ENCODE measurements at regions of chr21 and their contacts with region 1.

Region 1: DNA sequence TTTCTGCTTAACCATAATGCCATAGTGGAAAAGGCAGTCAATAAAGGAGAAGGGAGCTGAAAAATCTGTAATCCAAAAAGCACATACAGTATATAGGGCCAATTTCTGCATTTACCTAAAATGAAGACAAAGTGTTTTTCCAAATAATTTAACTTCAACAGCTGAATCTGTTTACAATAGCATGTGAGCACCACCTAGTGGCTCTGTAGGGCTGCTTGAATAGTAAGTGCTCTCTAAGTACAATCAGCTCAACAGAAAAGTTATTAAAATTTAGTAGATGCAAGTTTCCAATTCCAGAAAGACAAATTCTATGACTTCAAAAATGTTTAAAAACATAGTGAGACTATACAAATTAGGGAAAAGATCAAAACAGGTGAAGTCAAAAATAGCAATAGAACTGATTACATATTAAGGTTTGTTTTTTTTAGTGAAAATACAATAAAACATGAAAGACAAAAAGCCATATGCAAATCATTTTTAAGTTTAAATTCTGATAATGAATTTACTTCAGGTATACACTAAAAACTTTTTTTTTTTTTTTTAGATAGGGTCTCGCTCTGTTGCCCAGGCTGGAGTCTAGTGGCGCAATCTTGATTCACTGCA is 220.0 kb downstream of the SETD4 start:
- DNase-seq: peak; percentile 76
- H3K4me3 ChIP-seq: no peak overlapping the region
- H3K27ac ChIP-seq: no peak overlapping the region
- H3K4me1 ChIP-seq: no peaks in the 10 kb centered on the region
- CTCF ChIP-seq: peak; percentile 100

Region 2: DNA sequence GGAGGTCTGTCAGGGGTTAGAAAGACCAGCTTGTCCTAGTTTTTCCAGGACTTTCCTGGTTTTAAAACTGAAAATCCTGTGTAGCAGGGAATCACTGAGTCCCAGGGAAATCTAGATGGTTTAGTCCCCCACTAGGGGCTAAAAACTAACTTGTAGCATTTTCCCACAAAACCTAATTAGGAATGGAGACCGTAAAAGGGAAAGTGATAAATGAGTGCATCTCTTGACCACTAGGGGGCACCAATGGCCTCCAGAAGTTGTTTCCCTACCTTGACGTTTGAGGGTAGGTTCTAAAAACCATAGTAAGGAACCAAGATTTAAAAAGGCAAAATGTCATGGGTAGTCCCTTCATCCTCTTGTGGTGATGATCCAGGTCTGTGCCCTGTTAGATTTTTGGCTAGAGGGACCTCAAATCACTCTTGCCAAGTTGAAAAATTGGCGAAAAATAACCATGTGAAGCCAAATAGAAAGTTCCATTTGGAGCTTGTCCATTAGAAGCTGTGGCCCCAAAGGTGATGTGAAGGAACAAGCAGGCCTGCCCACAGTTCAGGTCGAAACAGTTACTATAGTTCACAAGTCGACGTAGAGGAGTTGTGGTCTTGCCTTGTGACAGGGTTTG is 1147.0 kb before region 1 on chr21:
- CTCF ChIA-PET with region 1: no interaction called
- POLR2A ChIA-PET with region 1: no interaction called
- intact Hi-C with region 1: loop called (anchors 2 kb)
- DNase-seq: peak; percentile 62
- H3K4me3 ChIP-seq: no peak overlapping the region
- H3K27ac ChIP-seq: no peak overlapping the region
- H3K4me1 ChIP-seq: no peaks in the 10 kb centered on the region
- CTCF ChIP-seq: peak; percentile 89

Region 3: GRCh38 chr21:34745557-34746255 is 1094.6 kb before region 1 on chr21:
- CTCF ChIA-PET with region 1: no interaction called
- POLR2A ChIA-PET with region 1: no interaction called
- intact Hi-C with region 1: loop called (anchors 1 kb)
- DNase-seq: peak; percentile 69
- H3K4me3 ChIP-seq: peak overlapping the region; percentile 12
- H3K27ac ChIP-seq: no peak overlapping the region
- H3K4me1 ChIP-seq: no peaks in the 10 kb centered on the region
- CTCF ChIP-seq: peak; percentile 93

Region 4: DNA sequence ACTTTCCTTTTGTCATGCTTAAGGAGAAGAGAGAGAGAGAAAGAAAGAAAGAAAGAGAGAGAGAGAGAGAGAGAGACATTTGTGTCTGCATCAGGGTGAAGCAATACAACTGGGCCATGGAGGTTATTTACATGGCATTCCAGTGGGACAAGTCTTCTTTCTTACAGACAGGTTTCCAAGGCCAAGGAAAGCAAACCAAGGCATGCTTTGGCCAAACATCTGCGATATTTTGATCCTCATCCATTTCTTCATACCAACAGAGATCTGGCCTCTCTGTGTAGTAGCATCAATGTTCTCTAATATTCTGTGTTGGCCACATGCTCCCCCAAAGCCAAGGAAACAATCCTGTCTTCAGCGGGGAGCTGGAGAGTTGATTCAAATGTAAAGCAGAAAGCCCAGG is 72.1 kb before region 1 on chr21:
- CTCF ChIA-PET with region 1: no interaction called
- POLR2A ChIA-PET with region 1: no interaction called
- intact Hi-C with region 1: no loop called
- DNase-seq: no peak
- H3K4me3 ChIP-seq: no peak overlapping the region
- H3K27ac ChIP-seq: no peak overlapping the region
- H3K4me1 ChIP-seq: no peaks in the 10 kb centered on the region
- CTCF ChIP-seq: no peak

Region 5: DNA sequence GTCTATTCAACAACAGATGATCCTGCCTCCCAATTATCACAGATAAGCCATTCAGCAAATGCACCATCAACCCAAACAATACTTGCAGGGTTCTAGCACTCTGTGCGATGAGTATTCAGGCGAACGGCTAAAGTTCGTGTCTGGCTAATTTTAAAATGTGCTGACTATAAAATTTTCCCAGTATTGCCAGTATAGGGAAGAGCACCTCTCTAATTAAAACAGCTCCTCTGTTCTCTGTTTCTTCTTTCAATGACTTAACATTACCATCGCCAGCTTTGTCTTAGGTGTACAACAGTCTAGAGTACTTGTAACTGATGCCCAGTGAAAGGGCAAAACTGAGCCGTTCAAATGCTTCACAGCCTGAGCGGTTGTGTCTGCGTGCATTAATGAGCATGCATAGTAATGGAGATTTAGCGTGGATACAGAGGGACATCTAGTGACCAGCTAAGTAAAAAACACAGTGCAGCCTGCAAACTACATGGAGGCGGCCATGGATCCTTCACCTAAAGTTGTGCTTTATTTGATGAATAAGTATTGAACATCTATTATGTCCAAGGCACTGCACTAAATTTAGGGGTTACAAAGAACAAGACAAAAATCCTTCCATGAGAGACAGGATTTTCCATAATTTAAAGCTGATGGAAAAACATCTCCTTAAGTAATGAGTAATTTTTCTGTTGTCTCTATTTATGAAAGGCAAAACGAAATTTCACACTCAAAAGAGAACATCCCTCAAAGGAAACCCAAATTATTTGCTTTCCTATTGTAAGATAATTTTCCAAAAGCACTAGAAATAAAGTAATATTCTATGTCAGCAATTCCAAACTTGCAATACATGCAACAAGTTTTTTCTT is 100.0 kb after region 1 on chr21:
- CTCF ChIA-PET with region 1: no interaction called
- POLR2A ChIA-PET with region 1: no interaction called
- intact Hi-C with region 1: loop called (anchors 5 kb)
- DNase-seq: peak; percentile 48
- H3K4me3 ChIP-seq: no peak overlapping the region
- H3K27ac ChIP-seq: no peak overlapping the region
- H3K4me1 ChIP-seq: no peaks in the 10 kb centered on the region
- CTCF ChIP-seq: peak; percentile 73

Region 6: GRCh38 chr21:36028127-36029069 is 188.1 kb after region 1 on chr21:
- CTCF ChIA-PET with region 1: no interaction called
- POLR2A ChIA-PET with region 1: no interaction called
- intact Hi-C with region 1: loop called (anchors 5 kb)
- DNase-seq: peak; percentile 68
- H3K4me3 ChIP-seq: no peak overlapping the region
- H3K27ac ChIP-seq: no peak overlapping the region
- H3K4me1 ChIP-seq: peaks cover 5% of the 10 kb centered on the region
- CTCF ChIP-seq: peak; percentile 97

Measured in OCI-LY7 (cell line).